PC-9 (cell line): ENCODE measurements at regions of chrX and their contacts with region 1.

Region 1: GRCh38 chrX:110086916-110087484 is 84.1 kb downstream of the TMEM164 start:
- DNase-seq: peak; percentile 51 to 99
- H3K4me3 ChIP-seq: peak overlapping the region; percentile 55; the same call in 1 of the 2 replicates
- H3K27ac ChIP-seq: peak overlapping the region; percentile 99
- H3K4me1 ChIP-seq: peaks cover 55% of the 10 kb centered on the region
- H3K27me3 ChIP-seq: no peaks in the 10 kb centered on the region
- CTCF ChIP-seq: 0 out of 2 replicates have a peak, but pooled peaks have one; percentile 15

Region 2: GRCh38 chrX:110021180-110022022 is 65.6 kb before region 1 on chrX:
- CTCF ChIA-PET with region 1: no interaction called
- POLR2A ChIA-PET with region 1: no interaction called
- intact Hi-C with region 1: loop called (anchors 1 kb)
- DNase-seq: no peak
- H3K4me3 ChIP-seq: no peak overlapping the region
- H3K27ac ChIP-seq: no peak overlapping the region
- H3K4me1 ChIP-seq: peaks cover 10% of the 10 kb centered on the region
- H3K27me3 ChIP-seq: no peaks in the 10 kb centered on the region
- CTCF ChIP-seq: no peak